Posterior vena cava (tissue), 2 donors: ENCODE measurements at regions of chr10 and their contacts with region 1.

Region 1: DNA sequence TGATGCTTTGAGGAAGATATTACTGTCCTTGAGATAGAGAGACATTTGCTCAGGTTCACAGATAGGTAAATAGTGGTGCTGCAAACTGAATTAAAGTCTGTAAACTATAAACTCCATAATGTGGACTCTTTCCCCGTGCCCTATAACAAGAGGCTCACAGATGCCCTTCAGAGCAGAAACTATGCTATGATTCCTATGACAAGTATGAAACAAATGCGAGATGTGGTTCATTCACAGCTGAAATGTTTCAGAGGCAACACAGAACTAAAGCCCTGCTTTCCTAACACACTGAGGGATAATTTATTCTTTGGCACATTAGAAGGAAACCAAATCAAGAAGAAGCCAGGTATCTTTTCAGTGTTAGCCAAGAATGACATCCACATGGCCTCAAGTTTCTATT is 13.4 kb downstream of the CHUK start:
- DNase-seq: no peak

Region 2: DNA sequence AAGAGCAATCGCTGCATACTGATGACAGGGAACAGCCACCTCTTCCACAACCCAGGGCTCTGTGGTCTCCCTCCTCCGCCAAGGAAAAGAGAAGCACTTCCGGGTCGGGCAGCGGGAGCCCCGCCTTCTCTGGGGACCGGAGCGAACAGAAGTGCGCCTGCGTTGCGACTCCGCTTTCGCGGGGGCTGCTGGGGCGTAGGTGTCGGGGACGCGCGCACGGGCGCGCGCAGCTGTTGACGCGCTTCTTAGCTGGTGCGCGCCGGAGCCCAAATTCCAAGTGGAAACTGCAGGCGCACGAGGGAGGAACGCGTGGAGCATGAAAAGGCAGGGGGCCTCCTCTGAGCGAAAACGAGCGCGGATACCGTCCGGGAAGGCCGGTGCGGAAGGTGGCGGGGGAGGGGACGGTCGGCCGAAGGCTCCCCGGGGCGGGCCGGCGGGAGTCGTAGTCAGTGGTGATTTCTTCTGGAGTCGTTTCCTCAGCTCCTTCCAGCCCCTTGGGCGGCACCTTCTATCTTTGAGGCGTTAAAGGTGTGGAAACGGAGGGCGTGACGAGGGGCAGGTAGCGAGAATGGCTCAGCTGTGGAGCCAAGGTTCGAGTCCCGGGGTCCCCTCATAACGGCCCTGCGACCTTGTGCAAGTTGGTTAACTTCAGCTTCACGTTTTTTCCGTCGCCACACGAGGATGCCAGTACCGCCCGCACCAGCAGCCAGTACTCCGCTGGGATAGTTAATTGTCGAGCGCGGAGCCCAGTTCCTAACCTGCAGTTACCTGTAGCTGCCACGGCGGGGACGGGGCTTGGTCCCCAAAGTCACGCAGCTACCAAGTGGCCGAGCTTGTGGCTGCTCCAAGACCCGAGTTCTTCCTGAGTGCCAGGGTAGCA is 483.7 kb before region 1 on chr10 and contains the starts of genes COX15 and CUTC:
- intact Hi-C with region 1: no loop called
- DNase-seq: peak; percentile 99
- total RNA-seq, gene COX15: 17.6 to 24.3 TPM
- total RNA-seq, gene CUTC: 22.6 to 25.7 TPM

Region 3: GRCh38 chr10:100229819-100230422 is 13.9 kb after region 1 on chr10:
- intact Hi-C with region 1: loop called in 1 of 2 experiments (anchors 1 kb)
- DNase-seq: no peak